ENCODE measurements at regions of chr2 and their contacts with region 1.

Region 1: GRCh38 chr2:16773080-16773713 is 107.6 kb upstream of the CYRIA start:
- DNase-seq: peak; percentile 56
- H3K4me3 ChIP-seq: no peak overlapping the region
- H3K27ac ChIP-seq: no peak overlapping the region
- H3K4me1 ChIP-seq: no peaks in the 10 kb centered on the region
- CTCF ChIP-seq: peak; percentile 85

Region 2: GRCh38 chr2:16105669-16106281 is 667.4 kb before region 1 on chr2:
- CTCF ChIA-PET with region 1: no interaction called
- POLR2A ChIA-PET with region 1: no interaction called
- intact Hi-C with region 1: no loop called
- DNase-seq: no peak
- H3K4me3 ChIP-seq: no peak overlapping the region
- H3K27ac ChIP-seq: no peak overlapping the region
- H3K4me1 ChIP-seq: no peaks in the 10 kb centered on the region
- CTCF ChIP-seq: no peak

Region 3: GRCh38 chr2:16900405-16901025 is 127.3 kb after region 1 on chr2:
- CTCF ChIA-PET with region 1: no interaction called
- POLR2A ChIA-PET with region 1: no interaction called
- intact Hi-C with region 1: loop called (anchors 5 kb)
- DNase-seq: peak; percentile 57
- H3K4me3 ChIP-seq: no peak overlapping the region
- H3K27ac ChIP-seq: no peak overlapping the region
- H3K4me1 ChIP-seq: no peaks in the 10 kb centered on the region
- CTCF ChIP-seq: peak; percentile 99

Region 4: GRCh38 chr2:17309741-17310339 is 536.6 kb after region 1 on chr2:
- CTCF ChIA-PET with region 1: no interaction called
- POLR2A ChIA-PET with region 1: no interaction called
- intact Hi-C with region 1: loop called (anchors 1 kb)
- DNase-seq: peak; percentile 57
- H3K4me3 ChIP-seq: no peak overlapping the region
- H3K27ac ChIP-seq: no peak overlapping the region
- H3K4me1 ChIP-seq: no peaks in the 10 kb centered on the region
- CTCF ChIP-seq: peak; percentile 86

Region 5: DNA sequence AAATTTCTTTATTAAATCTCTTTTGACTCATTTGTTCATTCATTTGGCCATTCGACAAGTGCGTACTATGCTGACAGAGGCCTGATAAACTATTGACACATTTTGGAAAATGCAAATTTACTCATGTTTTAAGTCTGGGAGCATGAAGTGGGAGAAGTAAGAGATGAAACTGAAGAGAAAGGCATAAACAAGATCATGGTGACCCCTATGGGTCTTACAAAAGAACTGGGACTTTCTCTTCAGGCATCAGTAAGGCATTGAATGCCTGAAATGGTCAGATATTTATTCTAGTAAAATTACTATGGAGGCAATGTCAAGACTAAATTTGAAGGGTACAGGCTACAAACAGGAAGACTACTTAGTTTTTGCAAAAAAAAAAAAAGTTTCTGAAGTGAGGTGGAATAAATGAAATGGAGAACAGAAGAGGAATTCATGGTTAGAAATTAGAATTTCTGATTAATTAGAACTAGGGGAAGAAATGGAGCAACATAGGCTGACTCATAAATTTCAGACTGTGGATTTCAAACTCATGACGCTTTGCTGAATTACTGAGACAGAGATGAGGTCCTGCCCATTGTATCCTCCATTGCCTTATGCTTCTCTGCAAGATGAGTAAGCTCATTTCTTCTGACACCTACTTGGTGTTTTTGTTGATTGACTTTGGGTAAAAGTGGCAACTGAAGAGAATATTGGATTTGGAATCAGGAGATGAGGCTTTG is 800.0 kb after region 1 on chr2:
- CTCF ChIA-PET with region 1: no interaction called
- POLR2A ChIA-PET with region 1: no interaction called
- intact Hi-C with region 1: loop called (anchors 2 kb)
- DNase-seq: peak; percentile 2
- H3K4me3 ChIP-seq: no peak overlapping the region
- H3K27ac ChIP-seq: no peak overlapping the region
- H3K4me1 ChIP-seq: no peaks in the 10 kb centered on the region
- CTCF ChIP-seq: peak; percentile 53

Region 6: DNA sequence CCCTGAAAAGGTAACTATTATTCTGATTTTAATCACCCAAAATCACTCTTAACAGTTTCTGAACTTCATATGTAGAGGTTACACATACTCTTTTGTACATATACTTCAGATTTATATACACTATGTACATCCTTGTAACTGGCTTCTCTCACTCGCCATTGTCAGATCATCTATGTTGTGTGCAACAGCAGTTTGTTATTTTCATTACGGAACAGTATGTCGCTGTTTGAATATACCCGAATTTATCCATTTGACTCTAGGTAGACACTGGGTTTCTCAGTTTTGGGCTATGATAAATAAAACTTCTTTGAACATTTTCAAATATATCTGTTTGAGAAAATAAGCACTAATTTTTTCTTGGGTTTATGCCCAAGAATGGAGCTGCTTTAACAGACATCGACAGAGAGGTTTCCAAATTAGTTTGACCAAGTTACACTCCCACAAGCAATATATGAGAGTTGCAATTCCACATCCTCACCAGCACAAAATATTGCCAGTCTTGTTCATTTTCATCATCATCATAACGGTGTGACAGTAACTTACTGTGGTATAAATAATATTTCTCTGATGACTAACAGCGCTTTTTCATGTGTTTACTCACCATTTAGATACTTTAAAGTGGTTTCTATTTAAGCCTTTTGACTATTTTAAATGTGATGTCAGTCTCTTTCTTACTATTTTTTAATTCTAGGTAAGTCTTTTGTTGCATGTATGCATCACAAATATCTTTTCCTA is 899.6 kb after region 1 on chr2:
- CTCF ChIA-PET with region 1: no interaction called
- POLR2A ChIA-PET with region 1: no interaction called
- intact Hi-C with region 1: loop called (anchors 10 kb)
- DNase-seq: no peak
- H3K4me3 ChIP-seq: no peak overlapping the region
- H3K27ac ChIP-seq: no peak overlapping the region
- H3K4me1 ChIP-seq: no peaks in the 10 kb centered on the region
- CTCF ChIP-seq: no peak

Measured in OCI-LY7 (cell line).